ENCODE measurements at regions of chr2 and their contacts with region 1.

Region 1: DNA sequence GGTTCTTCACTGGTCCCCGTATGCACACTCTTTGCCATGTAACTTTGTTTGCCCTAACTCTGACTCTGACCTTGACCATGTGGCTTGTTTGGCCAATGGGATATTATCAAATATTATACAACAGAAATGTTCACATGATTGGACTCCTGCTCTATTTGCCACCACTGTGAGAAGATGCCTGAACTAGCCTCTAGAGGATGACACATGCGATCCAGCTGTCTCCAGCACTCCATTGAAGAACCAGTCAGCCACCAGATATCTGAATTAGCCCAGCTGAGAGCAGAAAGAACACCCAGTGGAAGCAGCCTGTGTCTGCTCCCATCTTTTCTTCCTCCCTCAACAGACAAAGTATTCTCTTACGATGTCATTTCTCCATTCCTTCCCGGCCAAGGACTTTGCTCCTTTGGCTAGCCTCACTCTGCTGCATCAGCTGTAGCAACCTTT is 412.1 kb downstream of the IRS1 start:
- DNase-seq: no peak
- ATAC-seq: no peak
- H3K4me3 ChIP-seq: no peak overlapping the region
- H3K27ac ChIP-seq: no peak overlapping the region
- H3K4me1 ChIP-seq: no peaks in the 10 kb centered on the region
- H3K27me3 ChIP-seq: no peaks in the 10 kb centered on the region

Region 2: DNA sequence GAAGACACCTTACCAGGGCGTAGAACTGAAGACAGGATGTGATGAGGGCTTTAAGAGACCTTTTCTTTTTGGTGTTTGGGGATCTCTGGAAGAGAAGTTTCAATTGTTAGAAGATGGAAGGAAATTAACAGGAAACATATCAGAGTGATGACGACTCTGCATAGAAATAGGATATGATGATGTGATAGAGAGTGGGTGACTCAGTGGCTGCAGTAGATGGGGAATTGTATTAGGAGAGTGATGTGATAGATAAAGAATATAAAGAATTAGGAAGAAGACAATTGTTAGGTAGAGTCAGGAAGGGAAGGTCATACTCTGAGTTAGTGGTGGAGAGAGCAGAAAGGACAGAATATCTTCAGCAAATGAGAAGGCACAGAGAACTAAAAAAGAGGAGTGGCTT is 394.1 kb before region 1 on chr2:
- intact Hi-C with region 1: no loop called
- DNase-seq: no peak
- ATAC-seq: no peak
- H3K4me3 ChIP-seq: no peak overlapping the region
- H3K27ac ChIP-seq: no peak overlapping the region
- H3K4me1 ChIP-seq: peaks cover 0 to 1% of the 10 kb centered on the region in 2 donors
- H3K27me3 ChIP-seq: no peaks in the 10 kb centered on the region

Region 3: DNA sequence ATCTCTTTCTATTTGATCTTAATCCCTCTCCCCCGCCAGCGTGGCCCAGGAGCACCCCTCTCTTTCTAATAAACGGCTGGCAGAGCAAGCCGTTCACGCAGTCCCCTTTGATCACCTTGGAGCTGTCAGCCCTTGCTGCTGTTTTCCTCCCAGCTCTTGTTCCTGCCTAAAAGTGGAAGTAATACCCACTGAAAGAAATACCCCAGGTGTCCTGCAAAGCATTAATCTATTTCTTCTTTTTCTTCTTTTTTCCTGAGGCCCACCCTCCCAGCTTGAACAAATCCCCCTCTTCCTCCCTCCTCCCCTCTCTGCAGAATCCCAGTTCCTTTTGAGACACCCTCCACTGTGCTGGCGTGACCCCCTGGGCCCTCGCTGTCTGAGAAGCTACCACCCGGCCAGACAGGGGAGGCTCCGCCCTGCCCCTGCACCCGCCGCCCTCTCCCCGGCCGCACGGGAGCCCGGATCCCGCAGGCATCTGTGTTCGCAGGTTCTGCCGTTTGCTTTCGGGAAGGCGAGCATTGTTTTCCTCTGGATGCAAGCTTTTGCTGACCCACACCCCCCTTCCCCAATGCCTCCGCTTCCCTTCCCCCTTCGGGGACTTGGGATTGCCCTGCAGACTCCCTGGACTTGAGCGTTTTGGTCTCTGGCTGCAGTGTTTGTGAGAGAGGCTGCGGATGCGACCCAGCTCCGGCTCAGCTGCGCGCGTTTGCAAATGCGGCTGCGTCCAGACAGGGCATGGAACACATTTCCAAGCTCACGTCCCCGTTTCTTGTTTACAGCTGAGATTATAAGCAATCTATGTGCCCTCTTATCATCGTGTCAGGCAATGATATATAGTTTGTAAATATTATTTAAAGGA is 356.5 kb before region 1 on chr2:
- intact Hi-C with region 1: no loop called
- DNase-seq: peak; percentile 80 to 81
- ATAC-seq: peak; percentile 89
- H3K4me3 ChIP-seq: peak overlapping the region; percentile 12 to 40
- H3K27ac ChIP-seq: no peak overlapping the region
- H3K4me1 ChIP-seq: no peaks in the 10 kb centered on the region
- H3K27me3 ChIP-seq: no peaks in the 10 kb centered on the region

Region 4: DNA sequence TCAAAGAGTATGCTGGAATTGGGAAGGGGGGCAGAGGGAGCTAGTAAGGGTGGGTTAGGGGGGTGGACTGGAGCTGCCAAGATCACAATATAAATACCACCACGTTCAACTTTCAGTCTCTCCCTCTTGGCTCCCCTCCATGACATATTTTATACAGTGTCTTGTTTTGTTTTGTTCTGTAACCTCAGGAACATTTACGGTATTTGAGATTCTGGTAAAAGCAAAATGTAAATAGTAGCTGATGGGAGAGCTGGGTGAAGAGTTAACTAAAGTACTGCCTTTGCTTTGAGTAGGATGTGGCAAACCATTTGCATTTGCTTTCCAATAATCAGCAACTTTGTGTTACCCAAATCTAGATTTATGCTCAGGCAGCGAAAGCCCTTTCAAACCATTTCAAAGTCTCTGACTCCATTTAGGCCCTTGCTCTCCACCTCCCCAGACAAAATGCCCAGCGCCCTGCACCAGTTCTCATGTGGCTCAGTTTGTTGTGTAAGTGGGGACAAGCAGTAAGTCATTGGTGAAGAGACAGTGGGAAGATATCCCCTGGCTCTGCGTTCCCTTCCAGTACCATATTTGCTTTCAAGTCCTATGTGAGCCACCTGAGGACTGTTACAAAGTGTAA is 394.7 kb after region 1 on chr2:
- intact Hi-C with region 1: loop called in 1 of 2 experiments (anchors 10 kb)
- DNase-seq: no peak
- ATAC-seq: no peak
- H3K4me3 ChIP-seq: no peak overlapping the region
- H3K27ac ChIP-seq: peak overlapping the region; percentile 46 to 70
- H3K4me1 ChIP-seq: peaks cover 4 to 5% of the 10 kb centered on the region in 2 donors
- H3K27me3 ChIP-seq: no peaks in the 10 kb centered on the region

Measured in aorta (tissue), 5 donors.